Posterior vena cava (tissue), 2 donors: ENCODE measurements at regions of chr6 and their contacts with region 1.

Region 1: GRCh38 chr6:136289579-136290409 is at the start of gene BCLAF1:
- DNase-seq: peak; percentile 100
- total RNA-seq, gene BCLAF1: 88.9 to 98.7 TPM

Region 2: GRCh38 chr6:136201732-136202131 is 88.1 kb before region 1 on chr6:
- intact Hi-C with region 1: no loop called
- DNase-seq: no peak

Region 3: DNA sequence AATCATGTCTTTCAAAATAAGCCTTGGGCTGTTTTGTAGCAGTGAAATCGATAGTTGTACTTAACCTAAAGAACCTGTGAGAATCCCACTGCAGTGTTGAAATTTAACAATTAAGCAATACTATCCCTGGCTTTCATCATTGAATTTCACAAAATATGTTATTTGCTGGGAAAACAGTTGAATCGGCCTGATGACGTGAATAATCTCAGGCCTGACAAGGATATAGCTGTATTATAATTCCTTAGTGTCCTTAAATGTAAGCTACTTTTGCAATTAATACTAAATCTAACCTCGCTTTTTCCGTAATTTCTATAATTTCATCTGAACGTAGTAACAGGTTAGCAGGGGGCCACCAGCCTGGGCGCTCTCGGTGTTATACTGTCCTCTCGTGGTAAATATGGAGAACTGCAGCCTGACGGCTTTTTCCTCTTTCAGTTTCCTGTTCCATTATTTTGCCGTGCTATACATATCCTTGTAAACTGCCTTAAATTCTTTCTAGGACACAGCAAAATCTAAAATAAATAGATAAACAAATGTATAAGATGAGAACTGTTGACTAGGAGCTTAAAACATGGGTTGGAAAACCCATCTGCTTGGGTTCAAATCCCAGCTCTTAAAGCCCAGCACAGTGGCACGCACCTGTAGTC is 63.6 kb before region 1 on chr6:
- intact Hi-C with region 1: loop called in 1 of 2 experiments (anchors 2 kb)
- DNase-seq: no peak

Region 4: GRCh38 chr6:138129190-138129589 is 1839.4 kb after region 1 on chr6:
- intact Hi-C with region 1: loop called in 1 of 2 experiments (anchors 5 kb)
- DNase-seq: no peak